ENCODE measurements at regions of chr3 and their contacts with region 1.

Region 1: GRCh38 chr3:6799264-6799915 is 61.5 kb upstream of the GRM7 start:
- DNase-seq: peak in 3 of 5 donors; percentile 21 to 25 (median 23)
- ATAC-seq: peak in 1 of 4 donors; percentile 22
- H3K4me3 ChIP-seq: no peak overlapping the region
- H3K27ac ChIP-seq: no peak overlapping the region
- H3K4me1 ChIP-seq: no peaks in the 10 kb centered on the region
- H3K27me3 ChIP-seq: no peaks in the 10 kb centered on the region
- CTCF ChIP-seq: peak; percentile 52 to 77 (median 67)
- POLR2A ChIP-seq: no peak

Region 2: DNA sequence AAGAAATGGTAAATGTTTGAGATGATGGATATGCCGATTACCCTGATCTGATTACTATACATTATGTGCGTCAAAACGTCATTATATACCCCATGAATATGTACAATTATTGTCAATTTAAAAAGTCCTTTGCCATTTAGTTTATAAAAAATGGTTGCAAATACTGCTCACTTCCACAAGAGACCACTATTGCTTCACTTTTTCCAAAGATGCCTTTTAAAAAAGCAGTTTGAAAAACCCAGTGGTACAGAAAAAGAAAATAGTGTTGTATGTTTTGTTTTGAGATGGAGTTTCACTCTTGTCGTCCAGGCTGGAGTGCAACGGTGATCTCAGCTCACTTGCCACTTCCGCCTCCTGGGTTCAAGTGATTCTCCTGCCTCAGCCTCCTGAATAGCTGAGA is 1572.6 kb before region 1 on chr3:
- intact Hi-C with region 1: loop called in 3 of 10 experiments (anchors 10 kb)
- DNase-seq: no peak
- ATAC-seq: no peak
- H3K4me3 ChIP-seq: no peak overlapping the region
- H3K27ac ChIP-seq: no peak overlapping the region
- H3K4me1 ChIP-seq: peaks cover 0 to 9% (median 0%) of the 10 kb centered on the region in 12 donors
- H3K27me3 ChIP-seq: peaks cover 0 to 3% (median 0%) of the 10 kb centered on the region in 9 donors
- CTCF ChIP-seq: peak in 10 of 12 donors; percentile 28 to 63 (median 40)
- POLR2A ChIP-seq: no peak

Region 3: DNA sequence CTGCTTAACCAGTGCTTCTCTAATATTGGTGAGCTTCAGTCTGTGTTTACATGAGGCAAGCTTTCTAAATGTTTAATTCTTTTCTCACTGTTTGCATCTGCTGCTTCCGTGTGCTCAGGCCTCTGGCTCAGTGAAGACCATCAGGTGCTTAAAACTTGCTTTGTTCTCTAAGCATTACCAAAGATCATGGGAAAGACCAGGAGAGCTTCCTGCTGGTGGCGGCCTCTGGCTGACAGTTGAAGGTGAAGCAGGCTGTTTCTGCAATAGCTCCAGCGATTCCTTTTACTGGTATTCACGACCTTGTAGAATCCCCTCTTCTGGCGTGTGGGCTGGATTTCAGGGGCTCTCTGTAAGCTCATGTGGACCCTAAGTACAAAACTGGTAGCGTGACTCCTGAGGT is 1566.8 kb before region 1 on chr3:
- intact Hi-C with region 1: loop called in 3 of 10 experiments (anchors 10 kb)
- DNase-seq: no peak
- ATAC-seq: no peak
- H3K4me3 ChIP-seq: no peak overlapping the region
- H3K27ac ChIP-seq: no peak overlapping the region
- H3K4me1 ChIP-seq: peaks cover 0 to 11% (median 0%) of the 10 kb centered on the region in 12 donors
- H3K27me3 ChIP-seq: peaks cover 0 to 3% (median 0%) of the 10 kb centered on the region in 9 donors
- CTCF ChIP-seq: no peak
- POLR2A ChIP-seq: no peak

Region 4: DNA sequence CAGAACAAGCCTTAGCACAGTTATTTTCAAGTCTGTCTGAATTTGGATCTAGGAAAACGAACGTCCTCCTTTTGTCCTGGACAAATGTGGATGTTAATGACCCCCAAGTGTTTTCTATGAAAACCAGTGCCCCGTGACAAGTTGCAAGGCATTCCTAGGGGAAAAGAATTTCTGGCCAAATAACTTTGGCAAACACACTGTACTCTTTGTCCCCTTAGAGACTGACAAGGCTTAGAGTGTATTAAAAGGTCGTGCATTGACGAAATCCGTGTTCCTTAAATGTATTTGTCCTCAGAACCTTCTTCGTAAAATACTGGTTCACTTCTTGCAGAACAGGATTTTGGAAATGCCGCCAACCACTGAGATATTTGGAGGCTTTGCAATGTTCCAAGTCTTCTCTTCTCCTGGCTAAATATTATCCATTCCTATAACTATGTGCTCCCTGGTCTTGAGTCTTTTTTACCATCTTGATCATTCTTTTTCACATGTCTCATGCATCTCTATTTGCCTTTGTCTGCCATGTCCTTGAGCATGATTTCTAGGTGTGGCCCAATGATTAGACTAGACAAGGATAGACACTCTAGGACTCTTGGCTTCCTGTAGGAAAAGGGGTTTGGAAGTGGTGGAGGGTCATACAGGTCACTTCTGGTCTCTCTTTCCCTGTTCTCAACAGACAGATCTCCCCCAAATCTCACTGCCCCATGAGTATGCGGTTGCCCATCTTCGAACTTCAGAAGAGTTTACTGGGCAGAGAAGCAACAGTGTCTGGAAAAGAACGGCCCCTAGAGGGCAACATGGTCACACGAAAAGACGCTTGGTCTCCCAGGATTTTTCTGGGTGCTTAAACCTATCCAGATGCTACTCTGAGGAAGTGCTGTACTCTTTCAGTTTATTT is 1494.4 kb before region 1 on chr3:
- intact Hi-C with region 1: loop called in 4 of 10 experiments (anchors 5 to 10 kb)
- DNase-seq: peak in 2 of 5 donors; percentile 16 to 33
- ATAC-seq: peak; percentile 48 to 71 (median 60)
- H3K4me3 ChIP-seq: no peak overlapping the region
- H3K27ac ChIP-seq: no peak overlapping the region
- H3K4me1 ChIP-seq: peaks cover 0 to 13% (median 0%) of the 10 kb centered on the region in 12 donors
- H3K27me3 ChIP-seq: no peaks in the 10 kb centered on the region
- CTCF ChIP-seq: peak; percentile 36 to 64 (median 53)
- POLR2A ChIP-seq: no peak

Region 5: DNA sequence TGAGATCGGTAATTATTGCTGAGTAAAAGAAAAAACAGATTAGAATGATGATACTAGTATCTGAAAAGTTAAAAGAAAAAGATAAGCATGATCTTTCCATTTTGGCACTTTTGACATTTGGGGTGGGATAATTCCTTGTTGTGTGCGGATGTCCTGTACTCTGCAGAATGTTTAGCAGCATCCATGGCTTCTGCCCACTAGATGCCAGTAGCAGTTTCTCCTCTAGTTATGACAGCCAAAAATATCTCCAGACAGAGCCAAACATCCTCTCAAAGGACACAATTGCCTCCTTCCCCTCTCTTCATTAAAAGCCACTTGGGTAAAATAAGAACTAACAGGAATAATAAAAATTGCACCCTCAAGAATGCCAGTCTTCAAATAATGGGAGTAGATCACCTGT is 407.3 kb before region 1 on chr3:
- intact Hi-C with region 1: loop called in 2 of 10 experiments (anchors 2 to 5 kb)
- DNase-seq: no peak
- ATAC-seq: no peak
- H3K4me3 ChIP-seq: no peak overlapping the region
- H3K27ac ChIP-seq: no peak overlapping the region
- H3K4me1 ChIP-seq: no peaks in the 10 kb centered on the region
- H3K27me3 ChIP-seq: peaks cover 0 to 3% (median 0%) of the 10 kb centered on the region in 9 donors
- CTCF ChIP-seq: peak in 2 of 12 donors; percentile 14 to 19
- POLR2A ChIP-seq: no peak

Region 6: DNA sequence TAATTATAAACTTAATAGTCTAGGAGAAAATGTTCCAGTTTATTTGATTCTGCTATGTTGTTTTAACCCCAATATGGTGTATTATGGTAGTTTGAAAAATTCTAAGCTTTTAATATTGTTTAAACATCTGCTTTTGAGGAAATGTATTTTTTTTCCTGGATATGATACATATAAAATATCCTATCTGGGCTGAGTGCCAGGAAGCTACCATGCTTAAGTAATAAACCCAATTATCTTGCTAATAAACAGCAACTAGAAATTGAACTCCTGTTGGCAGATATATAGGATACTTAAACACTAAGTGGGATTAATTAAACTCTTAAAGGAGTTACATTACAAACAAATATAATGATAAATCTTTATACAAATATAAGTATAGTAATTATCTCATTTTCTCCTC is 232.1 kb before region 1 on chr3:
- intact Hi-C with region 1: no loop called
- DNase-seq: no peak
- ATAC-seq: no peak
- H3K4me3 ChIP-seq: no peak overlapping the region
- H3K27ac ChIP-seq: no peak overlapping the region
- H3K4me1 ChIP-seq: no peaks in the 10 kb centered on the region
- H3K27me3 ChIP-seq: no peaks in the 10 kb centered on the region
- CTCF ChIP-seq: no peak
- POLR2A ChIP-seq: no peak

Measured in heart left ventricle (tissue), 16 donors.